H1 (cell line): ENCODE measurements at regions of chr17 and their contacts with region 1.

Region 1: GRCh38 chr17:27353461-27354050 is 59.6 kb downstream of the WSB1 start:
- DNase-seq: peak; percentile 53 to 90
- H3K4me3 ChIP-seq: peak overlapping the region; percentile 47 to 94 (median 64)
- H3K27ac ChIP-seq: peak overlapping the region; percentile 58; the same call in 1 of the 2 replicates
- H3K4me1 ChIP-seq: peaks cover 0 to 8% (median 4%) of the 10 kb centered on the region in 4 experiments; a peak in 3 of 7 replicates
- H3K27me3 ChIP-seq: no peaks in the 10 kb centered on the region
- CTCF ChIP-seq: peak; percentile 74 to 96 (median 76)
- EP300 ChIP-seq: no peak
- POLR2A ChIP-seq: peak in 1 of 2 experiments; percentile 81; a peak in 1 of 3 replicates
- RAD21 ChIP-seq: peak; percentile 52 to 85; a peak in 3 of 4 replicates

Region 2: GRCh38 chr17:27153005-27153404 is 200.6 kb before region 1 on chr17:
- CTCF ChIA-PET with region 1: no interaction called
- POLR2A ChIA-PET with region 1: no interaction called
- DNase-seq: no peak
- H3K4me3 ChIP-seq: no peak overlapping the region
- H3K27ac ChIP-seq: no peak overlapping the region
- H3K4me1 ChIP-seq: no peaks in the 10 kb centered on the region
- H3K27me3 ChIP-seq: no peaks in the 10 kb centered on the region; a peak in 1 of 7 replicates
- CTCF ChIP-seq: no peak
- EP300 ChIP-seq: no peak
- POLR2A ChIP-seq: no peak
- RAD21 ChIP-seq: no peak

Region 3: DNA sequence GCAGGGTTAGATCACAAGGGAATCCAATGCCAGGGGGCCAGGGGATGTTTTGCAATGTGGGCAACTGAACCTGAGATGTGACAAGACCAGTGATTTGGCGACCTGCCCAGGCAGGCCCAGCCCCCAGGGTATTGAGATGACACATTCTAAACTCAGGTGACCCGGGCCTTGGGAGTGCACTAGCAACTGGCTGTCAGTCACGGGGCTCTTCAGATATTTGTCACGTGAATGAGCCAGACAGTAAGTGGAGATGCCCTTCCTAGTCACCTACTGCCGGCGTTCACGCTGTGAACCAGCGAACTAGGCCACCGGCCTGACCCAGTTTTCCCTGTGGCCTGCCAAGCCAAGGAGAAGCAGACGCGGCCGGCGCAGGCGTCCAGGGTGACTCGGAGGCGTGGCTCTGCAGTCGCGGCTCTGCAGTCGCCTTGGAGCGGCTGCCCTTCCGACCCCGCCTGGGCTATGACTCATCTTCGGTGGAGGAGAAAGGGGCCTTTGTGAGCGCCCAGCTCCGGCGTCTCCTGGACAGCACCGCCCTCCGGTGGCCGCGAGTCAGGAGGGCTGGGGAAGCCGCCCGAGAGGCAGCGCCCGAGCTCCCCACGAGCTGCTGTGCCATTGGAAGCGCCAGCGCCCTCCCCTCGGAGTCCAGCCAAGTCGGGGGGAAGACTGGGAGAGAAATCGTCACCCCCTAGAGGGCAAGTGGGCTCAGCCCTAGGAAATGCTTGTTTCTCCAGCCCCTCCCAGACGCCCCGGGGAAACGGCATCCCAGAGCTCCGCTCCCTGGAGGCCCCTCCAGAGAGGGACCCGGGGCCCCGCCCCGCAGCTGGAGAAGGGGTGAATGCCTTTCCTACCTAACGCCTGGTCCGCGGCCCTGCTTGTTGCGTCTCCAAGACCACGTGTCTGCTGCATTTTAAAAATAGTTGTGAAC is 20.8 kb before region 1 on chr17:
- CTCF ChIA-PET with region 1: interaction called, 4 read pairs
- POLR2A ChIA-PET with region 1: interaction called, 10 read pairs
- DNase-seq: peak; percentile 89 to 95
- H3K4me3 ChIP-seq: peak overlapping the region; percentile 14 to 66 (median 56)
- H3K27ac ChIP-seq: peak overlapping the region; percentile 24; the same call in 1 of the 2 replicates
- H3K4me1 ChIP-seq: peaks cover 0 to 6% (median 5%) of the 10 kb centered on the region in 4 experiments; a peak in 6 of 7 replicates
- H3K27me3 ChIP-seq: no peaks in the 10 kb centered on the region; a peak in 1 of 7 replicates
- CTCF ChIP-seq: peak; percentile 65 to 81 (median 75)
- EP300 ChIP-seq: peak in 1 of 2 experiments; percentile 9; a peak in 1 of 3 replicates
- POLR2A ChIP-seq: peak in 1 of 2 experiments; percentile 55; a peak in 2 of 3 replicates
- RAD21 ChIP-seq: peak; percentile 86 to 92

Region 4: DNA sequence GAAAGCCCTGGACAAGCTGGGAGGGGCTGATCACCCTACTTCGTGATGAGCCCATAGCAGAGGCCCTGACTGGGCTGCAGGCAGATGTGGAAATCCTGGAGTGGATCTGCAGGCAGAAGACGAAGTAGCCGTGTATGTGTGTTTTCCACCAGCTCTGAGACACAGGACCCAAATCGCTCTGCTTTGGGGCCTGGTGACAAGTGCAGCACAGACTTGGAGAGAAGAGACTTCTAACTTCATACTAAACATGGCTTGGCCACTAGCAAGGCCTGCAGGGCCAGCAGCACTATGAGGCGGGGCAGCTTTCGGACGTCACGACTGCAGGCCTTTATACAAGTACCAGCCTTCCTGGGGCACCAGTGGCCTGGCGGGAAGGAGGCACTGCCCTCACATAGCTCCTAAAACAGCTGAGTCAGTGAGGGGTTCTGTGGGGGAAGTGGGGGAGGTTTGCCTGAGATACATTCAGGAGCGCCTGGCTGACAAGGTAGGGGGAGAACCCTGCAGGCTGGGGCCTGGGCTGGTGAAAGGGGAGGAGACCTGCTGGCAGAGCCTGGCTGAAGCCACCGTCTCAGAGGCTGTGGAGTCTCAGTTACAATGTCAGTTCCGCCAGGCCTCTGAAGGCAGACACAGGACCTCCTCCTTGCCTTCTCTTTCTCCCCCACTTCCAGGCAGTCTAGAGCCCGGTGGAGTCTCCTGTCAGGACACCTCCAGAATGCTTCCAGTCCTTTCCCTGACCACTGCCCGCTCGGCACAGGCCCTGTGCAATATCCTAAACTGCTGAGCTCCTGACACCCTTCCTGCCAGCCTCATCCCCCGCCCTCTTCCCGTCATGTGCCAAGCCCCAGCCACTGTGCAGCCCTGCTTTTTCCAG is 13.8 kb after region 1 on chr17:
- CTCF ChIA-PET with region 1: interaction called, 20 read pairs
- POLR2A ChIA-PET with region 1: no interaction called
- DNase-seq: no peak
- H3K4me3 ChIP-seq: no peak overlapping the region
- H3K27ac ChIP-seq: no peak overlapping the region
- H3K4me1 ChIP-seq: no peaks in the 10 kb centered on the region; a peak in 2 of 7 replicates
- H3K27me3 ChIP-seq: no peaks in the 10 kb centered on the region
- CTCF ChIP-seq: no peak
- EP300 ChIP-seq: no peak
- POLR2A ChIP-seq: no peak
- RAD21 ChIP-seq: no peak

Region 5: GRCh38 chr17:27381007-27381501 is 27.5 kb after region 1 on chr17:
- CTCF ChIA-PET with region 1: interaction called, 76 read pairs
- POLR2A ChIA-PET with region 1: no interaction called
- DNase-seq: peak; percentile 68 to 97
- H3K4me3 ChIP-seq: no peak overlapping the region
- H3K27ac ChIP-seq: no peak overlapping the region
- H3K4me1 ChIP-seq: no peaks in the 10 kb centered on the region
- H3K27me3 ChIP-seq: no peaks in the 10 kb centered on the region
- CTCF ChIP-seq: peak; percentile 100
- EP300 ChIP-seq: peak in 1 of 2 experiments; percentile 46; a peak in 1 of 3 replicates
- POLR2A ChIP-seq: no peak
- RAD21 ChIP-seq: peak; percentile 78 to 82